Right cardiac atrium (tissue), 5 donors: ENCODE measurements at regions of chr1 and their contacts with region 1.

Region 1: GRCh38 chr1:209585672-209586071 is 2.2 kb downstream of the CAMK1G start:
- DNase-seq: peak; percentile 63 to 88 (median 86)
- ATAC-seq: peak; percentile 83 to 87
- H3K4me3 ChIP-seq: no peak overlapping the region
- H3K27ac ChIP-seq: no peak overlapping the region
- H3K4me1 ChIP-seq: no peaks in the 10 kb centered on the region
- H3K27me3 ChIP-seq: no peaks in the 10 kb centered on the region

Region 2: GRCh38 chr1:208500375-208500774 is 1085.3 kb before region 1 on chr1:
- intact Hi-C with region 1: no loop called
- DNase-seq: no peak
- ATAC-seq: no peak
- H3K4me3 ChIP-seq: no peak overlapping the region
- H3K27ac ChIP-seq: no peak overlapping the region
- H3K4me1 ChIP-seq: no peaks in the 10 kb centered on the region
- H3K27me3 ChIP-seq: no peaks in the 10 kb centered on the region

Region 3: GRCh38 chr1:209493559-209493958 is 92.1 kb before region 1 on chr1:
- intact Hi-C with region 1: no loop called
- DNase-seq: no peak
- ATAC-seq: no peak
- H3K4me3 ChIP-seq: no peak overlapping the region
- H3K27ac ChIP-seq: no peak overlapping the region
- H3K4me1 ChIP-seq: no peaks in the 10 kb centered on the region
- H3K27me3 ChIP-seq: no peaks in the 10 kb centered on the region

Region 4: GRCh38 chr1:209827384-209828262 is 242.0 kb after region 1 on chr1 and contains the start of gene UTP25:
- intact Hi-C with region 1: loop called in 1 of 4 experiments (anchors 10 kb)
- DNase-seq: peak; percentile 93 to 97 (median 97)
- ATAC-seq: peak; percentile 95
- H3K4me3 ChIP-seq: peak within 1 kb of the TSS; percentile 97
- H3K27ac ChIP-seq: peak within 1 kb of the TSS; percentile 21
- H3K4me1 ChIP-seq: peaks cover 2% of the 10 kb centered on the region
- H3K27me3 ChIP-seq: no peaks in the 10 kb centered on the region
- total RNA-seq, gene UTP25: 2.3 to 3.1 (median 3.0) TPM